ENCODE measurements at regions of chr11 and their contacts with region 1.

Region 1: DNA sequence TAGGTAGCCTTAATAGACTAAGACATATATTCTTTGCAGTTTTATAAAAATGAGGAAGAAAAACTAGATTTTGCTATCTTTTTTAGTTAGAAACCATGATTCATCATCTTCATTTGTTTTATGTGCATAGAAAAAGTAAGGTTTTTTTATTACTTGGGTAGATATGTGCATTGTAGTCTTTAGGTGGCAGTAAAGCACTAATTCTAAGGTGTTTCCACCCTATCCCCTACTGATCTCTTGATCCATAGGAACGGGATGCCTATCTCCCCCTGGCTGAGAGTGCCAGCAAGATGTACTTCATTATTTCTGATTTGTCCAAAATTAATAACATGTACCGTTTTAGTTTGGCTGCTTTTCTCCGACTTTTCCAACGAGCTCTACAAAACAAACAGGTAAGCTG is 148.1 kb downstream of the DYNC2H1 start:
- DNase-seq: peak; percentile 63
- H3K4me3 ChIP-seq: no peak overlapping the region; a peak in 1 of 4 replicates
- H3K27ac ChIP-seq: peak overlapping the region in 1 of 2 experiments; percentile 47; a peak in 2 of 4 replicates
- H3K4me1 ChIP-seq: peaks cover 0 to 8% of the 10 kb centered on the region in 2 experiments; a peak in 2 of 4 replicates
- H3K27me3 ChIP-seq: no peaks in the 10 kb centered on the region
- CTCF ChIP-seq: peak; percentile 63
- EP300 ChIP-seq: no peak
- RAD21 ChIP-seq: peak; percentile 85

Region 2: DNA sequence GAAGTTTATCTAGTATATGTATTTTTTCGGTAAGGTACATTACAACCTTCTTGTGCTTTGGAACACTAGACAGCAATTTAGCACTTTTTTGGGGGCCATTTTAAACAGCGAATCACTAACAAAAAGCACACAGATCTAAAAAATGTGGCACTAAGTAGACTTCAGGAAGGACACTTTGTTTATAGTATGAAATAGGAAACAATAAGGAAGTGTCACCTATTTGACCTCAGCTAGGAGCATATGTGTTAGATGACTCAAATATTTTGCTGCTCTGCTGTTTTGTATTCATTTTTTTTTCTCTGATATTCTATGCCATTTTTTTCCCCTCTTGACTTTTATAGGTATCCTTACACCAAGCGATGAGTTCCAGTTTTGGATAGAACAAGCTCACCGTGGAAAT is 142.5 kb before region 1 on chr11:
- CTCF ChIA-PET with region 1: no interaction called
- POLR2A ChIA-PET with region 1: no interaction called
- DNase-seq: no peak
- H3K4me3 ChIP-seq: no peak overlapping the region
- H3K27ac ChIP-seq: no peak overlapping the region
- H3K4me1 ChIP-seq: peaks cover 0 to 7% of the 10 kb centered on the region in 2 experiments; a peak in 1 of 4 replicates
- H3K27me3 ChIP-seq: no peaks in the 10 kb centered on the region
- CTCF ChIP-seq: no peak
- EP300 ChIP-seq: no peak
- RAD21 ChIP-seq: no peak

Region 3: DNA sequence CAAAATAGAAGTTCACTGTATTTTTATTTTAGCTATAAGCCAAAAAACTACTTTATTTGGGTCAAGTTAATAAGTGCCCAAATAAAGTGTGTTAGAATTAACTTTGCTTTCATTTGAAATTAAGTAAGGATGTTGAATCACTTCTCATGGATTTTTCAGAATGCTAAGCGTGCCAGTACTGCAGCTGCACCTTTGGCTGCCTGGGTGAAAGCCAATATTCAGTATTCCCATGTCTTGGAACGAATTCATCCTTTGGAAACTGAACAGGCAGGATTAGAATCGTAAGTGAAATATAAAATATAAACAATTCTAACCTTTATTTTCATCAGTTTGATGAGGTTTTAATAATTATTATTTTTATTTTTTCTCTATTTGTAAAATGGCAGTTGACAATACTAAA is 34.6 kb before region 1 on chr11:
- CTCF ChIA-PET with region 1: no interaction called
- POLR2A ChIA-PET with region 1: no interaction called
- DNase-seq: no peak
- H3K4me3 ChIP-seq: no peak overlapping the region
- H3K27ac ChIP-seq: no peak overlapping the region; a peak in 1 of 4 replicates
- H3K4me1 ChIP-seq: peaks cover 0 to 2% of the 10 kb centered on the region in 2 experiments; a peak in 2 of 4 replicates
- H3K27me3 ChIP-seq: no peaks in the 10 kb centered on the region
- CTCF ChIP-seq: no peak
- EP300 ChIP-seq: no peak
- RAD21 ChIP-seq: no peak

Region 4: GRCh38 chr11:103234974-103235373 is 22.4 kb before region 1 on chr11:
- CTCF ChIA-PET with region 1: interaction called, 10 read pairs
- POLR2A ChIA-PET with region 1: no interaction called
- DNase-seq: no peak
- H3K4me3 ChIP-seq: no peak overlapping the region
- H3K27ac ChIP-seq: peak overlapping the region; percentile 56 to 58; a peak in 3 of 4 replicates
- H3K4me1 ChIP-seq: peaks cover 0 to 5% of the 10 kb centered on the region in 2 experiments; a peak in 2 of 4 replicates
- H3K27me3 ChIP-seq: no peaks in the 10 kb centered on the region
- CTCF ChIP-seq: no peak
- EP300 ChIP-seq: no peak
- RAD21 ChIP-seq: no peak

Region 5: DNA sequence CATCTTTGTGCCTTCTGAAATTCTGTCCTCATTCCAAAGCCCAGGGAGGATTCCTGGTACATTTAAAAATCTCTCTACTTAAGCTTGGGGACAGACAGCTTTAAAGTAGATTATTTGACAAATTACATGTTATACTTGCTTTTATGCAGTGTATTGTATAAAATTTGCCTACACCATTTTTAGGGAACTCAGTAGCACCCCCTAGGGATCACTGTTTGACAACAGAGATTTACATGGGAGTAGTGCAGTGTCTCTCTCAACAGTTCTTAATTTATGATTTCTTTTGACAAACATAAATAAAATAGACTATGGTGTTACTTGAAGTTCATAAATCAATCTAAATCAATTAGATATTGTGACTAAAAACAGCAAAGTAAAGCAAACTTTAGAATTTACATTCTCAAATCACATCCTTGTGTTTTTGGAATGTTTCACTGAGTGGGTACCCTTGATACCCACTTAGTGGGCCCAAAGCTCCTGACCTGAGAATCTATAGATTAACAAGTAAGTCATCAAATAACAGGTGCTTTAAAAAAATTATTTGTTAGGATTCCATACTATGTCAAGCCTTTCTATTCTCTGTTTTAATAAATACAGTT is 280.6 kb after region 1 on chr11:
- CTCF ChIA-PET with region 1: interaction called, 30 read pairs
- POLR2A ChIA-PET with region 1: interaction called, 7 read pairs
- DNase-seq: peak; percentile 30
- H3K4me3 ChIP-seq: no peak overlapping the region
- H3K27ac ChIP-seq: peak overlapping the region; percentile 57 to 99; a peak in 3 of 4 replicates
- H3K4me1 ChIP-seq: peaks cover 16 to 32% of the 10 kb centered on the region in 2 experiments
- H3K27me3 ChIP-seq: no peaks in the 10 kb centered on the region
- CTCF ChIP-seq: peak; percentile 85
- EP300 ChIP-seq: peak in 1 of 2 experiments; percentile 24; a peak in 1 of 4 replicates
- RAD21 ChIP-seq: peak; percentile 65

Region 6: GRCh38 chr11:103601225-103601846 is 344.0 kb after region 1 on chr11:
- CTCF ChIA-PET with region 1: interaction called, 20 read pairs
- POLR2A ChIA-PET with region 1: no interaction called
- DNase-seq: peak; percentile 47
- H3K4me3 ChIP-seq: no peak overlapping the region
- H3K27ac ChIP-seq: peak overlapping the region in 1 of 2 experiments; percentile 60; a peak in 2 of 4 replicates
- H3K4me1 ChIP-seq: no peaks in the 10 kb centered on the region
- H3K27me3 ChIP-seq: no peaks in the 10 kb centered on the region
- CTCF ChIP-seq: peak; percentile 97
- EP300 ChIP-seq: 0 out of 4 replicates have a peak, but pooled peaks of 1 of the 2 experiments have one; percentile 13
- RAD21 ChIP-seq: peak; percentile 98

Region 7: DNA sequence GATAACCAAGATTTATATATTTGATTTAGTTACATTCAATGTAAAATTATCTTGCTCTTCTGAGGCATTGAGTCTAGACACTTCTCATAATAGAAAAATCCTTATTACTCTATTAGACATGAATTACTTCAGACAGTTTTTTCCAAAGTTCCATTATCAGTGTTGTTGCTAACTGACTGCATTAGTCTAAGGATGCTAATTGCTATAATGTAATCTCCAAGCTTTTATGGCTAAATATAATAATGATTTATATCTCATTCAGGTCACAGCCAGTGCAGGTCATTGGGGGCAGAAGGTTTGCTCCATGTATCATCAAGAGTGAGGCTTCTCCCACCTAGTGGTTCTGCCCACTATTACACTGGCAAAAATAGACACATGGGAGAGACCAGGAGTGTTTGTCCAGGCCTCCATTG is 401.9 kb after region 1 on chr11:
- CTCF ChIA-PET with region 1: interaction called, 12 read pairs
- POLR2A ChIA-PET with region 1: no interaction called
- DNase-seq: peak; percentile 48
- H3K4me3 ChIP-seq: no peak overlapping the region
- H3K27ac ChIP-seq: peak overlapping the region; percentile 14 to 83
- H3K4me1 ChIP-seq: peaks cover 4 to 8% of the 10 kb centered on the region in 2 experiments; a peak in 3 of 4 replicates
- H3K27me3 ChIP-seq: no peaks in the 10 kb centered on the region
- CTCF ChIP-seq: peak; percentile 66
- EP300 ChIP-seq: peak; percentile 71 to 87
- RAD21 ChIP-seq: peak; percentile 80

Region 8: GRCh38 chr11:103682318-103683184 is 425.2 kb after region 1 on chr11:
- CTCF ChIA-PET with region 1: interaction called, 14 read pairs
- POLR2A ChIA-PET with region 1: no interaction called
- DNase-seq: peak; percentile 49
- H3K4me3 ChIP-seq: no peak overlapping the region; a peak in 1 of 4 replicates
- H3K27ac ChIP-seq: peak overlapping the region in 1 of 2 experiments; percentile 34; a peak in 1 of 4 replicates
- H3K4me1 ChIP-seq: peaks cover 6 to 8% of the 10 kb centered on the region in 2 experiments; a peak in 2 of 4 replicates
- H3K27me3 ChIP-seq: no peaks in the 10 kb centered on the region
- CTCF ChIP-seq: peak; percentile 92
- EP300 ChIP-seq: no peak
- RAD21 ChIP-seq: peak; percentile 96

Measured in SK-N-SH (cell line).